Heart right ventricle (tissue), 16 donors: ENCODE measurements at regions of chr2 and their contacts with region 1.

Region 1: DNA sequence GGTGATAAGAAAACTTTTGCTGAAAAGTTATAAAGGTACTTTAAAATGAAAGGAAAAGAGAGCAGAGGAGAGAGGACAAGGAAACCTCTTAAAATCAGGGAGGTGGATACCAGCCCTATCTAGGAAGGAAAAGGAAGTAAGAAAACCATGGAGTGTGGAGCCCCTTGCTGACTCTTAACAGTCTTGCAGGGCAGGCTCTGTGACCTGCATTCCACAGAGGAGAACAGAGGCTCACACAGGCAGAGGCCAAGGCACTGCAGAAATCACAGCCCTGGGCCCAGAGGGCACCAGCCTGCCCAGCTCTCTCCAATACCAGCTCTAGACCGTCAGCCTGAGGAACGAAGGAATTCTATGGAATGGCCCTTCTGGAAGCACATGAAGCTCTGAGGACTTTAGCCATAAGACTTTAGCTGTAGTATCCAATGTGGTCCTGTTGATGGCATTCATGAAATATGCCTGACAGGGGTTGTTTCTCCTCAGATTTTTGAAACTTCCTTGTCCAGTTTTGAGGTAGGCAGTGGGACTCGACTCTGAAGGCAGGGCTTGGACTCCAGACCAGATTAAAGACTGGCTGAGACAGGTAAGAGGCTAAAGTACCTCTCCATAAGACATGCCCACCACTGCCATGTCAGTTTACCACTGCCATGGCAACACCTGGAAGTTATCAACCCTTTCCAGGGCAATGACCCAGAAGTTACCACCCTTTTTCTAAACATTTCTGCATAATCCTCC is 216.3 kb downstream of the ANAPC1 start:
- DNase-seq: peak in 1 of 2 donors; percentile 50
- ATAC-seq: peak; percentile 81 to 95 (median 90)
- H3K4me3 ChIP-seq: no peak overlapping the region
- H3K27ac ChIP-seq: peak overlapping the region in 1 of 10 donors; percentile 2
- H3K4me1 ChIP-seq: peaks cover 0 to 39% (median under 1%) of the 10 kb centered on the region in 9 donors
- H3K27me3 ChIP-seq: no peaks in the 10 kb centered on the region
- CTCF ChIP-seq: peak in 8 of 9 donors; percentile 41 to 77 (median 64)

Region 2: GRCh38 chr2:110812726-110813645 is 854.7 kb before region 1 on chr2:
- intact Hi-C with region 1: loop called in 5 of 10 experiments (anchors 5 to 10 kb)
- DNase-seq: no peak
- ATAC-seq: no peak
- H3K4me3 ChIP-seq: no peak overlapping the region
- H3K27ac ChIP-seq: no peak overlapping the region
- H3K4me1 ChIP-seq: peaks cover 0 to 4% (median 0%) of the 10 kb centered on the region in 9 donors
- H3K27me3 ChIP-seq: no peaks in the 10 kb centered on the region
- CTCF ChIP-seq: no peak

Region 3: DNA sequence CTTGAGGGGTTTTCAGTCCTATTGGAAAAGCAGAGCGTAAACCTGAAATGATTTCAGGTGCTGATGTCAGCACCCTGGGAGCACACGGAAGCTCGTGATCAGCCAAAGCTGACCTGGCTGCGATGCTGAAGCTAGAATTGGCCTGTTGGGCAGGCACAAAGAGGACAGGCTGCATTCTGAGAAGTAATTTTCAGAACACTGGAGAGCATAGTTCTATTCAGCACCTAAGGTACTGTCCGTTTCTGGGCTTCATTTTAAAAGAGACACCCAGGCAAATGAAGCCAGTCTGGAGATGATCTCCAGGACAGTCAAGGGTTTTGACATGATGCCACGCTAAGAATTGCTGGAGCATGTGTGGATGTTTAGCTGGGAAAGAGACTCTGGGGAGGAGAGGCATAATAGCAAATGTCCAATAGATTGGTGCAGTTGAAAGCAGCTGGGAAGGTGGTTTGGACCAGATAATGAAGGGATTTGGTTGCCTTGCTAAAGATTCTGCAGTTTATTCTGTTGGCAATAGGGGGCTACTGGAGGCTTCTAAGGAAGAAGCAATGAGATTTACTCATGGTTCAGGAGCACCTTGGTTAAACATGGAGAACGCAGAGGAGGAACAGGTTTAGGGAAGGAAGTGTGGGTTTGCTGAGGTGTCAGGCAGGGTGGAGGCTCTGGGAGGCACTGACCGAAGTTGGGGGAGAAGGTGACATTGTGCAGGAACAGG is 848.8 kb before region 1 on chr2:
- intact Hi-C with region 1: loop called in 5 of 10 experiments (anchors 5 to 10 kb)
- DNase-seq: no peak
- ATAC-seq: no peak
- H3K4me3 ChIP-seq: no peak overlapping the region
- H3K27ac ChIP-seq: no peak overlapping the region
- H3K4me1 ChIP-seq: no peaks in the 10 kb centered on the region
- H3K27me3 ChIP-seq: peaks cover 0 to 5% (median 2%) of the 10 kb centered on the region in 7 donors
- CTCF ChIP-seq: no peak

Region 4: GRCh38 chr2:111111101-111111755 is 556.5 kb before region 1 on chr2:
- intact Hi-C with region 1: loop called in 6 of 10 experiments (anchors 5 to 10 kb)
- DNase-seq: no peak
- ATAC-seq: no peak
- H3K4me3 ChIP-seq: no peak overlapping the region
- H3K27ac ChIP-seq: no peak overlapping the region
- H3K4me1 ChIP-seq: no peaks in the 10 kb centered on the region
- H3K27me3 ChIP-seq: peaks cover 0 to 53% (median 39%) of the 10 kb centered on the region in 7 donors
- CTCF ChIP-seq: no peak

Region 5: DNA sequence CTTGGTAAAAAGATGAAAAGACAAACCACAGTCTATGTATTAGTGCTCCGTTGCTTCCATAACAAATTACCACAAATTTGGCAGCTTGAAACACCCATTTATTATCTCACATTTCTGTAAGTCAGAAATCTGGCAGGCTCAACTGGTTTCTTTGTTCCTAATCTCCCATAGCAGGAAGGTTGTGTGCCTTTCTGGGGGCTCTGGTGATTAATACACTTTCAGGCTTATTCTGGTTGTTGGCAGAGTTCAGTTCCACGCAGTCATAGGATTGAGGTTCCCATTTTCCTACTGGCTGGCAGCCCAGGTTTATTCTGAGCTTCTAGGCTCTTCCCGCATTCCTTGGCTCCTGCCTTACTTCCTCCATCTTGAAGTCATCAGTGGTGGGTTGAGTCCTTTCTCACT is 27.0 kb after region 1 on chr2:
- intact Hi-C with region 1: no loop called
- DNase-seq: no peak
- ATAC-seq: peak in 6 of 8 donors; percentile 48 to 68 (median 56)
- H3K4me3 ChIP-seq: no peak overlapping the region
- H3K27ac ChIP-seq: peak overlapping the region in 1 of 10 donors; percentile 46
- H3K4me1 ChIP-seq: peaks cover 0 to 26% (median 0%) of the 10 kb centered on the region in 9 donors
- H3K27me3 ChIP-seq: no peaks in the 10 kb centered on the region
- CTCF ChIP-seq: no peak

Region 6: GRCh38 chr2:112046231-112046630 is 378.5 kb after region 1 on chr2:
- intact Hi-C with region 1: no loop called
- DNase-seq: no peak
- ATAC-seq: no peak
- H3K4me3 ChIP-seq: no peak overlapping the region
- H3K27ac ChIP-seq: no peak overlapping the region
- H3K4me1 ChIP-seq: peaks cover 0 to 22% (median 15%) of the 10 kb centered on the region in 9 donors
- H3K27me3 ChIP-seq: no peaks in the 10 kb centered on the region
- CTCF ChIP-seq: no peak